Left cardiac atrium (tissue), 4 donors: ENCODE measurements at regions of chr7 and their contacts with region 1.

Region 1: GRCh38 chr7:70812511-70812910 is 319.4 kb upstream of the GALNT17 start:
- DNase-seq: no peak
- ATAC-seq: no peak

Region 2: DNA sequence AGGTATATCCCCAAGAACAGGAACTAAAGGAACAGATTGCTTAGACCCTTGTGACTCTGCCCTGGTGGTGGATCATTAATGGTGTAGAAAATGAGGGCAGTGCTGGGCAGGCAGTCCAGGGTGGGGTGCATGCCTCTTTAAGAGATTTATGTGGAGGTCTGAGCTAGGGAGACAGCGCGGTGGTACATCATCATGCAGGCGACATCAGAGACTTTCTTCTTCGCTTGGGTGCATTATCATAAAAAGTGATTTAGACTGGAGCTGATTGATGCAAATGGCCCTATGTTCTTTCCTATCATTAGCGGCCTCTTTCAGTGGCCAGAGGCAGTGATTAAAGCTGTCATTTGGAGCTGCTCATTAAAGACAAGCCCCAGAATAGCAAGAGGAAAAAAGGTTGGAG is 199.7 kb before region 1 on chr7:
- intact Hi-C with region 1: no loop called
- DNase-seq: no peak
- ATAC-seq: no peak

Region 3: DNA sequence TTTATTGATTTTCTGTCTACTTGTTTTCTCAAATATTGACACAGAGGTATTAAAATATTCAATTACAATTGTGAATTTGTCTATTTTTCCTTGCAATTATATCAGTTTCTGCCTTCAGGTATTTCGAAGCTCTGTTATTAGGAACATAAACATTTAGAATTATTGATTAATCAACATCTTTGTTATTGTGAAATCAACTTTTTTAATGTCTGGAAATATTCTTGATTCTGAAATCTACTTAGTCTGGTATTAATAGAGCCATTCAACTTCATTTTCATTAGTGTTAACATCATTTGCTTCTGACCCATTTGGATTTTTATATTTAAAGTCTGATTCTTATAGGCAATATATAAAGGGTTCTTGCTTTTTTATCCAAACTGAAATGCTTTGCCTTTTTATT is 1669.4 kb after region 1 on chr7:
- intact Hi-C with region 1: loop called in 1 of 2 experiments (anchors 10 kb)
- DNase-seq: no peak
- ATAC-seq: no peak